Activated CD4-positive, alpha-beta memory T cell treated with anti-CD3 and anti-CD28 coated beads for 36 hours (primary cell): ENCODE measurements at regions of chr9 and their contacts with region 1.

Region 1: GRCh38 chr9:35611230-35611797 is 6.3 kb downstream of the TESK1 start:
- DNase-seq: peak; percentile 69
- H3K4me3 Mint-ChIP-seq: no peak overlapping the region
- H3K27ac Mint-ChIP-seq: no peak overlapping the region
- H3K4me1 Mint-ChIP-seq: peaks cover 12% of the 10 kb centered on the region
- H3K27me3 Mint-ChIP-seq: no peaks in the 10 kb centered on the region

Region 2: GRCh38 chr9:35367451-35367850 is 243.9 kb before region 1 on chr9:
- CTCF ChIA-PET with region 1: no interaction called
- POLR2A ChIA-PET with region 1: no interaction called
- intact Hi-C with region 1: no loop called
- DNase-seq: no peak
- H3K4me3 Mint-ChIP-seq: no peak overlapping the region
- H3K27ac Mint-ChIP-seq: no peak overlapping the region
- H3K4me1 Mint-ChIP-seq: no peaks in the 10 kb centered on the region
- H3K27me3 Mint-ChIP-seq: no peaks in the 10 kb centered on the region

Region 3: DNA sequence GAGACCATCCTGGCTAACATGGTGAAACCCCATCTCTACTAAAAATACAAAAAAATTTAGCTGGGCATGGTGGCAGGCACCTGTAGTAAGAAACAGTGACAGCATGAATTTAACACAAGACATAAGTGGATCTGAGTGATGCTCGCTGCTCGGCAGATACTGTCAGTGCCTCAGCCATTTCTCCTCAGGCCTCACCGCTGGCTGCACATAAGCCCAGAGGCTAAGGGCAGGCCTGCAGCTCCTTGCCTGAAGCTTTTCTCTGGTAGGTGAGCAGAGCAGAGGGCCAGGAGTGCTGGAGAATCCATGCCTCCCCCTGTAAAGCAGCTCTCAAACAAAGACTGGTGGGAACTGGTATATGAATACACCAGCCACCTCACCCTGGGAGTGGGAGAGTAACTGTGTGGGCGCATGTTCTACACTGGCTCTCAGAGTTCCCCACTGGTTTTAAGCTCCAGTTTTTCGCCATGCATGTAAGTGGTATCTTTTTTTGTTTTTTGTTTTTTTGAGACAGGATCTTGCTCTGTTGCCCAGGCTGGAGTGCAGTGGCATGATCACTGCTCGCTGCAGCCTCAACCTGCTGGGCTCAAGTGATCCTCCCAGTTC is 17.2 kb after region 1 on chr9:
- CTCF ChIA-PET with region 1: interaction called, 24 read pairs
- POLR2A ChIA-PET with region 1: interaction called, 4 read pairs
- intact Hi-C with region 1: no loop called
- DNase-seq: peak; percentile 4
- H3K4me3 Mint-ChIP-seq: no peak overlapping the region
- H3K27ac Mint-ChIP-seq: no peak overlapping the region
- H3K4me1 Mint-ChIP-seq: peaks cover 3% of the 10 kb centered on the region
- H3K27me3 Mint-ChIP-seq: no peaks in the 10 kb centered on the region

Region 4: GRCh38 chr9:35636135-35636876 is 25.0 kb after region 1 on chr9:
- CTCF ChIA-PET with region 1: interaction called, 18 read pairs
- POLR2A ChIA-PET with region 1: no interaction called
- intact Hi-C with region 1: no loop called
- DNase-seq: no peak
- H3K4me3 Mint-ChIP-seq: no peak overlapping the region
- H3K27ac Mint-ChIP-seq: peak overlapping the region; percentile 23
- H3K4me1 Mint-ChIP-seq: peaks cover 52% of the 10 kb centered on the region
- H3K27me3 Mint-ChIP-seq: no peaks in the 10 kb centered on the region

Region 5: DNA sequence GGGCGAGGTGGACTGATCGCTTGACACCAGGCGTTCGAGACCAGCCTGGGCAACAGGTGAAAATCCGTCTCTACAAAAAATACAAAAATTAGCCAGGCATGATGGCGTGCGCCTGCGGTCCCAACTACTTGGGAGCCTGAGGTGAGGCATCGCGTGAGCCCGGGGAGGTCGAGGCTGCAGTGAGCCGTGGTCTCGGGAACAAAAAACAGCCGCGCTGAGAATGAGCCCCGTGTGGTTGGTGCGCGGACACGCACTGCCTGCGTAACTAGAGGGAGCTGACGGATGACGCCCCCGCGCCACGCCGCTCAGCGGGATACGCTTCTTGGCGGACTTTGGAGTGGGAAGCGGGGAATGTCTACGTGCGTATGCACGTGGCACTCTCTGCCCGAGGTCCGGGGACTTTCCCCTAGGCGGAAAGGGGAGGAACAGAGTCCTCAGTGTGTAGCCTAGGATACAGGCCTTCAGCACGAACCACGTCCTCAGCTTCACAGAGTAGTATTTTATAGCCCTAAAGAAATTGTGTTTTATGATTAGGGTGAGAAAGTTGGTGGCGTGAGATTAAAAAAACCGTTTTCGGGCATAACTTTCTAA is 46.3 kb after region 1 on chr9 and contains the start of gene RMRP:
- CTCF ChIA-PET with region 1: interaction called, 23 read pairs
- POLR2A ChIA-PET with region 1: interaction called, 4 read pairs
- intact Hi-C with region 1: no loop called
- DNase-seq: peak; percentile 96
- H3K4me3 Mint-ChIP-seq: peak within 1 kb of the TSS; percentile 86
- H3K27ac Mint-ChIP-seq: peak within 1 kb of the TSS; percentile 96
- H3K4me1 Mint-ChIP-seq: peaks cover 64% of the 10 kb centered on the region
- H3K27me3 Mint-ChIP-seq: peaks cover 2% of the 10 kb centered on the region
- total RNA-seq, gene RMRP: 10,694 to 13,592 TPM

Region 6: DNA sequence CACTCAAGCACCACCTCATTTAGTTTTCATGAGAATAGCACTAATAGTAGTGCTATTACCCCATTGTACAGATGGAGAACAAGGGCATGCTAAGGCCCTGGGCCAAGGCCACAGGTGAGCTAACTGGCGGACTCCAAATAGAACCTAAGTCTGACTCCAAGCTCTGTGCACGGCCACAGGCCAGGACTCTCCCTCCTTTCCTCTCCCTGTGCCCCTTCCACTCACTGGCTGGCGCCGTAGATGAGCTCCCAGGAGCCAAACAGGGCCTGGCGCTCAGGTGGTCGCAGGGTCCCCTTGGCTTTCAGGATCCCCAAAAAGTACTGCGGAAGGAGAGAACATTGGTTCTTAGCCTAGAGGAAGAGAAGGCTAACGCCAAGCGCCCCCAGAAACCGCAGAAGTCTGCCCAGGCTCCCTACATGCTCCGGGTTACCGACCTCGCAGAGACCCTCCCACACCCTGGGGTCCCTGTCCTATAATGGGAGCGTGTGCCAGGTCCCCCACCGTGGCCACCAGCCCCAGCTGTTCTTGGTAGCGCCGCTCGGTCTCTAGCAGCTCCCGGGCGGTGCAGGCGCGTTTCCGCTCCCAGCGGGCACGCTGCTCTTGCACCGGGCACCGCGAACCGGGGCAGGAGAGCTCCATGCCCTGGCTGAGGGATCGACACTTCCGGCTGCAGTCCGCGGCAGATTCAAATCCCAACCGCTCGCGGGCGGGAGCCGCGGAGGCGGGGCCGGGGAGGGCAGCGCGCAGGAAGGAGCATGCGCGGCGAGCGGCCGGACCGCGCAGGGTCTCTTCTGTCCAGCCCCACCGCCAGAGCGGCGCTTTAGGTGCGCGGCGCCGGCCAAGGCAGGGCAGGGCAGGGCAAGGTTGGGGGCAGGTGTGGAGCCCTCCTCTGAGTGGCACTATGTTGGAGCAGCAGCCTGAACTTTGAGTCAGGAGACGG is 53.5 kb after region 1 on chr9 and contains the start of gene ARHGEF39:
- CTCF ChIA-PET with region 1: interaction called, 23 read pairs
- POLR2A ChIA-PET with region 1: interaction called, 4 read pairs
- intact Hi-C with region 1: no loop called
- DNase-seq: peak; percentile 89
- H3K4me3 Mint-ChIP-seq: peak within 1 kb of the TSS; percentile 84
- H3K27ac Mint-ChIP-seq: peak within 1 kb of the TSS; percentile 73
- H3K4me1 Mint-ChIP-seq: peaks cover 53% of the 10 kb centered on the region
- H3K27me3 Mint-ChIP-seq: no peaks in the 10 kb centered on the region
- total RNA-seq, gene ARHGEF39: 28.1 to 28.2 TPM

Region 7: GRCh38 chr9:35996358-35996975 is 385.2 kb after region 1 on chr9:
- CTCF ChIA-PET with region 1: no interaction called
- POLR2A ChIA-PET with region 1: no interaction called
- intact Hi-C with region 1: no loop called
- DNase-seq: no peak
- H3K4me3 Mint-ChIP-seq: no peak overlapping the region
- H3K27ac Mint-ChIP-seq: no peak overlapping the region
- H3K4me1 Mint-ChIP-seq: no peaks in the 10 kb centered on the region
- H3K27me3 Mint-ChIP-seq: peaks cover 21% of the 10 kb centered on the region